ENCODE measurements at regions of chr14 and their contacts with region 1.

Region 1: GRCh38 chr14:37116933-37117849 is 55.2 kb downstream of the SLC25A21 start:
- DNase-seq: peak; percentile 68
- H3K4me3 ChIP-seq: no peak overlapping the region
- H3K27ac ChIP-seq: no peak overlapping the region
- H3K4me1 ChIP-seq: peaks cover 16% of the 10 kb centered on the region
- H3K27me3 ChIP-seq: no peaks in the 10 kb centered on the region
- CTCF ChIP-seq: peak; percentile 47 to 70

Region 2: GRCh38 chr14:36647824-36648753 is 469.1 kb before region 1 on chr14:
- CTCF ChIA-PET with region 1: interaction called, 3 read pairs
- dilution Hi-C with region 1: no loop called
- in situ Hi-C with region 1: loop called in 1 of 2 experiments (anchors 10 kb)
- intact Hi-C with region 1: loop called (anchors 1 kb)
- DNase-seq: peak; percentile 58
- H3K4me3 ChIP-seq: peak overlapping the region; percentile 51 to 66 (median 56)
- H3K27ac ChIP-seq: no peak overlapping the region
- H3K4me1 ChIP-seq: peaks cover 16% of the 10 kb centered on the region
- H3K27me3 ChIP-seq: peaks cover 47% of the 10 kb centered on the region
- CTCF ChIP-seq: peak; percentile 52 to 78

Region 3: DNA sequence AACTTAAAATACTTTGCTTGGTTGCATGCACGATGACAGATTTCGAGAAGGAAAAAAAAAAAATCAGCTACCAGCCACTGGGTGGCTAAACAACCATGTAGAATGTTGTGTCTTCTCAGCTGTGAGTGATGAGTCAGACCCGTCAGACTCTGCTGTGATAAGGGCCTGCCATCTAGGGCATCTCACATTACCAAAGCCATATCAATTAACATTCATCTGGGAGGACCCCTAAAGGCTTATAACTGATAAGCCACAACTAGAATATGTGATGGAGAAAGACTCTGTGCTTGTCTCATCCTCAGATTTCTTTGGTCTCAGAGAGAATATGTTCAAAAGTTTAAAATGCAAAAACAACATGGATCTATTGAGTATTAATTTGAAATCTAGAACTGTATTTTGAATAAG is 344.1 kb before region 1 on chr14:
- CTCF ChIA-PET with region 1: no interaction called
- dilution Hi-C with region 1: no loop called
- in situ Hi-C with region 1: no loop called
- intact Hi-C with region 1: loop called (anchors 1 kb)
- DNase-seq: peak; percentile 48
- H3K4me3 ChIP-seq: no peak overlapping the region
- H3K27ac ChIP-seq: no peak overlapping the region
- H3K4me1 ChIP-seq: no peaks in the 10 kb centered on the region
- H3K27me3 ChIP-seq: no peaks in the 10 kb centered on the region
- CTCF ChIP-seq: peak; percentile 39 to 46

Region 4: GRCh38 chr14:37023875-37024565 is 93.2 kb before region 1 on chr14:
- CTCF ChIA-PET with region 1: no interaction called
- dilution Hi-C with region 1: no loop called
- in situ Hi-C with region 1: no loop called
- intact Hi-C with region 1: loop called (anchors 5 kb)
- DNase-seq: no peak
- H3K4me3 ChIP-seq: no peak overlapping the region
- H3K27ac ChIP-seq: no peak overlapping the region
- H3K4me1 ChIP-seq: no peaks in the 10 kb centered on the region
- H3K27me3 ChIP-seq: no peaks in the 10 kb centered on the region
- CTCF ChIP-seq: peak; percentile 18 to 41

Region 5: GRCh38 chr14:37094502-37094901 is 22.7 kb before region 1 on chr14:
- CTCF ChIA-PET with region 1: no interaction called
- dilution Hi-C with region 1: no loop called
- in situ Hi-C with region 1: no loop called
- intact Hi-C with region 1: no loop called
- DNase-seq: no peak
- H3K4me3 ChIP-seq: no peak overlapping the region
- H3K27ac ChIP-seq: no peak overlapping the region
- H3K4me1 ChIP-seq: no peaks in the 10 kb centered on the region
- H3K27me3 ChIP-seq: no peaks in the 10 kb centered on the region
- CTCF ChIP-seq: no peak

Region 6: GRCh38 chr14:37150414-37150813 is 33.2 kb after region 1 on chr14:
- CTCF ChIA-PET with region 1: no interaction called
- dilution Hi-C with region 1: no loop called
- in situ Hi-C with region 1: no loop called
- intact Hi-C with region 1: loop called (anchors 1 kb)
- DNase-seq: peak; percentile 36
- H3K4me3 ChIP-seq: no peak overlapping the region
- H3K27ac ChIP-seq: no peak overlapping the region
- H3K4me1 ChIP-seq: peaks cover 2% of the 10 kb centered on the region
- H3K27me3 ChIP-seq: no peaks in the 10 kb centered on the region
- CTCF ChIP-seq: peak; percentile 65 to 68

Region 7: DNA sequence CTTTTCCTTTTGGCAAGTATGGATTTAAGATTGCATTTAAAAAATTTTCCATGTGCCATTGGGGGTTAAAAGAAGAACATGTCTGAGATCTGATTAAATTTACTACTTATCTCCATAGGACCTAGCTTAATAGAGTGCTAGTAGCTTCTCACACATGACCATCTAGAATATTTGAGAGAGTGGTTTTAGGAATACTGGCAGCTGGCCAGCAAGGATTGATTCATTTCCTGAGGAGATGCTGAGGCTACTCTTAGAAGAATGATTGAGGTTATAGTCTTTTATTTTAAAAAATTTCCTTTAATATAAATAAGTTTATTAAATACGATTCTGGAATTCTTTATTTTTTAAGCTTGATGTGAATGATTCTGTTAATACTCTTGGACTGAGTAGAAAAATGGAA is 136.7 kb after region 1 on chr14:
- CTCF ChIA-PET with region 1: no interaction called
- dilution Hi-C with region 1: no loop called
- in situ Hi-C with region 1: no loop called
- intact Hi-C with region 1: no loop called
- DNase-seq: peak; percentile 62
- H3K4me3 ChIP-seq: no peak overlapping the region
- H3K27ac ChIP-seq: no peak overlapping the region
- H3K4me1 ChIP-seq: no peaks in the 10 kb centered on the region
- H3K27me3 ChIP-seq: no peaks in the 10 kb centered on the region
- CTCF ChIP-seq: no peak

Region 8: DNA sequence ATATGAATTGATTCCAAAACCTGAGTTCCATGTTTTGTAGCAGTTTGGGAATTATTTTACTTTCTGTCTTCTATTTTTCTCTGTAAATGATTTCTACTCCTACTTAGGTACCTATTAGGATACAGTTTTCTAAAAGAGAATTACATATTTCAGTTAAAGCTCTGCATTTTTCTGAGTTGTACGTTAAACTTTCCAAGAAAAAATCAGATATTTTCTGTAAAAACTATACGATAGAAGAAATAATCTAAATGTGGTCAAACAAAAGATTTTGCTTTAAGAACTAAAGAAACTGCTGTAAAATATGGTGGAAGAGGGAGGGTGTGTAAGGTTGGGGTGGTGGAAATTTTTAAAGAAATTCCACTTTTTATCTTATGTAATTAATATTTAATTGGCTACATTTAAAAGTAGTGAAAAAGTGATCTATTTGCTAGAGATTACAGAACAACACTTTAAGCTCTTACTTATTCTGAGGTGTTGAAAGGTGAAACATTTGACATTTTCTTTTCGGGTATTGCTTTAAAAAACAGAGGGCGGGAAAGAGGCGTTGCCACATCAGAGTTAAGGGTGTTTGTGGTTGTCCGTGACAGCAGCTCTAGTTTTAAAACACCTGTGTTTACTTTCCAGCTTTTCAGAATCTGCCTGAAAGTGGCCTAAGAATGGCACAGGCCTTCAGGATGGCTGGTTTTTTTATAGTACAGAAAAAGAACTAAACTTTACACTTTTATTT is 267.8 kb after region 1 on chr14:
- CTCF ChIA-PET with region 1: no interaction called
- dilution Hi-C with region 1: no loop called
- in situ Hi-C with region 1: no loop called
- intact Hi-C with region 1: no loop called
- DNase-seq: no peak
- H3K4me3 ChIP-seq: no peak overlapping the region
- H3K27ac ChIP-seq: no peak overlapping the region
- H3K4me1 ChIP-seq: no peaks in the 10 kb centered on the region
- H3K27me3 ChIP-seq: no peaks in the 10 kb centered on the region
- CTCF ChIP-seq: no peak